ENCODE measurements at regions of chr7 and their contacts with region 1.

Region 1: GRCh38 chr7:115217373-115217772 is 295.5 kb downstream of the MDFIC start:
- DNase-seq: no peak
- H3K4me3 Mint-ChIP-seq: no peak overlapping the region
- H3K27ac Mint-ChIP-seq: no peak overlapping the region
- H3K4me1 Mint-ChIP-seq: no peaks in the 10 kb centered on the region
- H3K27me3 Mint-ChIP-seq: no peaks in the 10 kb centered on the region
- CTCF ChIP-seq: no peak

Region 2: GRCh38 chr7:114865564-114865963 is 351.8 kb before region 1 on chr7:
- CTCF ChIA-PET with region 1: interaction called, 18 read pairs
- intact Hi-C with region 1: loop called (anchors 1 kb)
- DNase-seq: peak; percentile 63
- H3K4me3 Mint-ChIP-seq: no peak overlapping the region
- H3K27ac Mint-ChIP-seq: no peak overlapping the region
- H3K4me1 Mint-ChIP-seq: peaks cover 9% of the 10 kb centered on the region
- H3K27me3 Mint-ChIP-seq: no peaks in the 10 kb centered on the region
- CTCF ChIP-seq: peak; percentile 47

Region 3: DNA sequence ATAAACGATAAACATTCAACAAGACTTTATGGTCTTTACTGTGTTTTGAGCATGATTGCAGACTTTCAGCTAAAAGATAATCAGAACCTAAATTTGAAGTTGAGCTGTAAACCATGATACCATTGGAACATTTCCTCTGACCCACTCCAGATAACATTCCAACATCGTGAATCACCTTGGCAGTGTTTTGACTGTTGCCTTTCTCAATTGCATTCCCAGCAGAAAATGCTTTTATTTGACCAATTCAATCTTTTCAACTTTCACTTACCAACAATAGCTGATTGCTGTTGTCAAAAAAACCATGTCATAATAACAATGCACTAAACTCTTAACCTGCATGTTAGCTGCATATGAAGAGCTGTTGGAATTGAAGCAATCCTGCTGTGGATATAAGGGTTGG is 129.9 kb before region 1 on chr7:
- CTCF ChIA-PET with region 1: no interaction called
- intact Hi-C with region 1: loop called (anchors 5 kb)
- DNase-seq: peak; percentile 35
- H3K4me3 Mint-ChIP-seq: no peak overlapping the region
- H3K27ac Mint-ChIP-seq: no peak overlapping the region
- H3K4me1 Mint-ChIP-seq: peaks cover 39% of the 10 kb centered on the region
- H3K27me3 Mint-ChIP-seq: no peaks in the 10 kb centered on the region
- CTCF ChIP-seq: no peak

Region 4: GRCh38 chr7:115145512-115145911 is 71.9 kb before region 1 on chr7:
- CTCF ChIA-PET with region 1: no interaction called
- intact Hi-C with region 1: loop called (anchors 5 kb)
- DNase-seq: no peak
- H3K4me3 Mint-ChIP-seq: peak overlapping the region; percentile 36
- H3K27ac Mint-ChIP-seq: peak overlapping the region; percentile 92
- H3K4me1 Mint-ChIP-seq: peaks cover 15% of the 10 kb centered on the region
- H3K27me3 Mint-ChIP-seq: no peaks in the 10 kb centered on the region
- CTCF ChIP-seq: no peak

Region 5: GRCh38 chr7:115230882-115231571 is 13.7 kb after region 1 on chr7:
- CTCF ChIA-PET with region 1: interaction called, 10 read pairs
- intact Hi-C with region 1: no loop called
- DNase-seq: peak; percentile 32
- H3K4me3 Mint-ChIP-seq: no peak overlapping the region
- H3K27ac Mint-ChIP-seq: peak overlapping the region; percentile 97
- H3K4me1 Mint-ChIP-seq: peaks cover 9% of the 10 kb centered on the region
- H3K27me3 Mint-ChIP-seq: no peaks in the 10 kb centered on the region
- CTCF ChIP-seq: no peak